ENCODE measurements at regions of chr17 and their contacts with region 1.

Region 1: GRCh38 chr17:1716076-1716995 is 6.2 kb upstream of the TLCD2 start:
- DNase-seq: peak; percentile 100
- ATAC-seq: peak; percentile 86
- H3K4me3 Mint-ChIP-seq: peak overlapping the region; percentile 95
- H3K27ac Mint-ChIP-seq: peak overlapping the region; percentile 95
- H3K4me1 Mint-ChIP-seq: peaks cover 37% of the 10 kb centered on the region
- H3K27me3 Mint-ChIP-seq: peaks cover 6% of the 10 kb centered on the region

Region 2: DNA sequence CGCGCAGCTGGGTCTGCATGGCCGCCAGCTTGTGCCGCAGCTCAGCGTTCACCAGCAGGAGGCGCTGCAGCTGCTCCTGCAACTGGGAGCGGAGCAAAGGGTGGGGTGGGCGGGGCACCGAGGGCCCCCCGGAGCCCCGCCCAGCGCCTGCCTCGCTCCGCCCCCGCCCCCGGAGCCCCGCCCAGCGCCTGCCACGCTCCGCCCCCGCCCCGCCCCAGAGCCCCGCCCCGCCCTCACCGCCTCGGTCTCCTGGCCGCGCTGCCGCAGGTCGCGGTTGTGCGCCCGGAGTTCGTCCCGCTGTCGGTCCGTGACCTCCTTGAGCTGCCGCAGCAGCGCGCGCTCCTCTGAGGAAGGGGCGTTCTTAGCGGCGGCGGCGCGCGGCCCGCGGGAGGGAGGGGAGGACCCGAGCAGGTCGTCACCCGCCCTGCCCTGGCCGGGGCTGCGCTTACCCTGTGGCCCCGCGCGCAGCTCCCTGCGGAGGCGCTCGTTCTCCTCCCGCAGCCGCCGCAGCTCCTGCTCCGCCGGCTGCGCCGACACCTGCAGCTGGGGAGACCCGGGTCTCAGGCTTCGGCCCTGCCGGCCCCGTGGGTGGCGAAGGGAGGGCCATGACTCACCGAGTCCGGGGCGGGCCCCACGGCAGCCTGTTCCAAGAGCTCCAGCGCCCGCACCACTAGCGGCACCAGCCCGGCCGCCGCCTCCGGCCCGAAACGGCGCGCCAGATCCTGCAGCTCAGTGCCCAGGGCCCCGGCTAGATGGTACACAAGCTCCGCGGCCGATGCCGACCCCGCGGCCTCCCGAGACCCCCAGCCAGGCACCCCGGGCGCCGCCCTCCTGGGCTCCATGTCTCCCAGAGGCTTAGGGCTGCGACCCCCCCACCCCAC is 67.1 kb before region 1 on chr17:
- CTCF ChIA-PET with region 1: interaction called, 18 read pairs
- POLR2A ChIA-PET with region 1: no interaction called
- DNase-seq: peak; percentile 95
- ATAC-seq: peak; percentile 80
- H3K4me3 Mint-ChIP-seq: peak overlapping the region; percentile 66
- H3K27ac Mint-ChIP-seq: peak overlapping the region; percentile 63
- H3K4me1 Mint-ChIP-seq: peaks cover 43% of the 10 kb centered on the region
- H3K27me3 Mint-ChIP-seq: no peaks in the 10 kb centered on the region

Region 3: DNA sequence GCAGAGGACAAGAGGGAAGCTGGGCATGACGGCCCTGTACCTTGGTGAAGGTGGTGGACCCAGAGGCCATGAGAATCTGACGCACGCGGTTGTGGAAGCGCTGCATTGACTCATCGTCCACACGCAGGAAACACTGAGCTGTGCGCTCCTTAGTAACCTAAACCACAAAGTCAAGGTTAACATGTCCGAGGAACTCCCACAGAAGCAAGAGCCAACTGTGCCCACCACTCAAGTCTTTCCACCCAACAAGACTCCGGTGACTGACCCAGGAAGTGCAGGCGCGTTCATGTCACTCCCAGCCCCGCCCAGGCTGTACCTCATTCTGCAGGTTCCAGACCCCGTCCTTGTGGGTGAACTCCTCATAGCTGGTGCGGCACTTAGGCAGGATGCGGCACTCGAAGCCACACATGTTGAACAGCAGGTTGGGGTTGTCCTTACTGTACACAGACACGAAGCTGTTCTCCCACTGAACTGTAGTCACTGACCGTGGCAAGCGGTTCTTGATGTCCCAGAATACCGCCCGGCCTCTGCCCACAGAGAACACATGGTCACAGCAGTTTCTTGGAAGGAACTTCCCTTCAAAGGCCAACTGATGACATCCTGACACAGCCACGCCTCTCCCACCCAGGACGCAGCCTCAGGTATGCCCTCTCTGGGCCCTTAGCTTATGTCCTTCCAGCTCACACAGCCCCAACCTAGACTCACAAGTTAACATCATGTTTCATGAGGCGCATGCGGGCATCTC is 43.1 kb before region 1 on chr17:
- CTCF ChIA-PET with region 1: interaction called, 13 read pairs
- POLR2A ChIA-PET with region 1: no interaction called
- DNase-seq: no peak
- ATAC-seq: peak; percentile 31
- H3K4me3 Mint-ChIP-seq: no peak overlapping the region
- H3K27ac Mint-ChIP-seq: no peak overlapping the region
- H3K4me1 Mint-ChIP-seq: peaks cover 3% of the 10 kb centered on the region
- H3K27me3 Mint-ChIP-seq: no peaks in the 10 kb centered on the region

Region 4: DNA sequence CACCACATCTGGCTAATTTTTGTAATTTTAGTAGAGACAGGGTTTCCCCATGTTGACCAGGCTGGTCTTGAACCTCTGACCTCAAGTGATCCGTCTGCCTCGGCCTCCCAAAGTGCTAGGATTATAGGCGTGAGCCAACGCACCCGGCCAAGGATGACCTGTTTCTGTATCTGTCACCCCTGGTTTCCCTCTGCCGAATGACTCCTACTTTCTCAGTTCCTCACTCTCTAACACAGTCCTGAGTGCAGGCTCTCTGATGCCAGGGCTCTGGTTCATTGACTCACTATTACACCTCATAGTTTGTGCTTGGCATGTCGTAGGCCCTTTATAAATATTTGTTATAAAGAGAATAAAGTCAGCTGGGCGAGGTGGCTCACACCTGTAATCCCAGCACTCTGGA is 21.0 kb before region 1 on chr17:
- CTCF ChIA-PET with region 1: no interaction called
- POLR2A ChIA-PET with region 1: no interaction called
- DNase-seq: no peak
- ATAC-seq: no peak
- H3K4me3 Mint-ChIP-seq: no peak overlapping the region
- H3K27ac Mint-ChIP-seq: no peak overlapping the region
- H3K4me1 Mint-ChIP-seq: no peaks in the 10 kb centered on the region
- H3K27me3 Mint-ChIP-seq: peaks cover 3% of the 10 kb centered on the region

Region 5: DNA sequence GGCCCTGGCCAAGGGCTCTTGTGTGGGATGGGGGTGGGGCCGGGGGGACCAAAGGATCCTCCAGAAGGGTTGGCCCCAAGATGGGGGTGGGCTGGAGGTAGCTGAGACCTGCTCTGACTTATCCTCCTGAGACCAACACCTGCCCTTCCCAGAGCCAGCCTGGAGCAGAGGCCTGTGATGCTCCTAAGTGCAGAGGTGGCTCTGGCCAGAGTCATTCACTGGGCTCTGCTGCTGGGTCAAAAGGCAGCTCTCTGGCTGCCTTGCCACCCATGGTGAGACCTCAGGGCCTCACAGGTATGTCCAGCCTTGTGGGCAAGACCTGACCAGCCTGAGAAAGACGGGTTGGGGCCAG is 26.7 kb after region 1 on chr17:
- CTCF ChIA-PET with region 1: no interaction called
- POLR2A ChIA-PET with region 1: no interaction called
- DNase-seq: no peak
- ATAC-seq: no peak
- H3K4me3 Mint-ChIP-seq: no peak overlapping the region
- H3K27ac Mint-ChIP-seq: no peak overlapping the region
- H3K4me1 Mint-ChIP-seq: no peaks in the 10 kb centered on the region
- H3K27me3 Mint-ChIP-seq: no peaks in the 10 kb centered on the region

Region 6: GRCh38 chr17:1783834-1784611 is 67.7 kb after region 1 on chr17:
- CTCF ChIA-PET with region 1: interaction called, 35 read pairs
- POLR2A ChIA-PET with region 1: interaction called, 3 read pairs
- DNase-seq: no peak
- ATAC-seq: no peak
- H3K4me3 Mint-ChIP-seq: no peak overlapping the region
- H3K27ac Mint-ChIP-seq: peak overlapping the region; percentile 33
- H3K4me1 Mint-ChIP-seq: peaks cover 12% of the 10 kb centered on the region
- H3K27me3 Mint-ChIP-seq: no peaks in the 10 kb centered on the region

Region 7: DNA sequence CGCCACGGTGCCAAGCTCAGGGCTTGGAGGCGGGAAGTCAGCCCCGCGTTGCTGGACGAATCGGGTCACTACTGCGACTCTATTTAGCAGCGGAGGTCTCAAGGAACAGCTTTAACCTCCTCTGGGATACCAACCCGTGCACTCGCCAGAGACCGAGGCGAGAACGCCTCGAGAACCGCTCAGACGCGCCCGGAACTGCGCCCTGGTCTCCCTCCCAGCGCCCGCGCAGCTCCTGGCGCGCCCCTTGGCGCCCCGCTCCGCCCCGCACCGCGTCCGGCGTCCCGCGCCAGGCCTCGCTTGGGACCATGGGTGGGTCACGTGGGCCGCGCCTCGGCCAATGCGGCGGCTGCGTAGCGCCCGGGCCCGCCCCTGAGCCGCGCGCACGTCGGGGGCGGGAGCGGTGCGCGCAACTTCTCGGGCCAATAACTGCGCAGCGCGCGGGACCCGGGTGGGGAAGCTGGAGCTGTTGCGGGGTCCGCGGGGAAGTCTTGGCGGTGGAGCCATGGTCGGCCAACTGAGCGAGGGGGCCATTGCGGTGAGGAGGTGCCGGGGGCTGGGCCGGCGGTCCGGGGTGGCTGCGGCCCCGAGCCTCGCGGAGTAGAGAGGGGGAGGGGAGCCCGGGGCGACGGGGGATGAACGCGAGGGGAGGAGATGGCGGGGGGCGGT is 113.4 kb after region 1 on chr17 and contains the starts of genes RPA1 and SMYD4:
- CTCF ChIA-PET with region 1: interaction called, 17 read pairs
- POLR2A ChIA-PET with region 1: interaction called, 16 read pairs
- DNase-seq: peak; percentile 92
- ATAC-seq: peak; percentile 99
- H3K4me3 Mint-ChIP-seq: peak within 1 kb of the TSS; percentile 91
- H3K27ac Mint-ChIP-seq: peak within 1 kb of the TSS; percentile 91
- H3K4me1 Mint-ChIP-seq: peaks cover 71% of the 10 kb centered on the region
- H3K27me3 Mint-ChIP-seq: no peaks in the 10 kb centered on the region
- total RNA-seq, gene RPA1: 314 to 325 TPM
- total RNA-seq, gene SMYD4: 40.3 to 41.7 TPM

Region 8: GRCh38 chr17:1865252-1866037 is 149.1 kb after region 1 on chr17:
- CTCF ChIA-PET with region 1: interaction called, 44 read pairs
- POLR2A ChIA-PET with region 1: interaction called, 9 read pairs
- DNase-seq: peak; percentile 70
- ATAC-seq: peak; percentile 59
- H3K4me3 Mint-ChIP-seq: no peak overlapping the region
- H3K27ac Mint-ChIP-seq: no peak overlapping the region
- H3K4me1 Mint-ChIP-seq: peaks cover 20% of the 10 kb centered on the region
- H3K27me3 Mint-ChIP-seq: no peaks in the 10 kb centered on the region

Measured in activated CD8-positive, alpha-beta T cell treated with anti-CD3 and anti-CD28 coated beads, Interleukin-2, amount 10 ng/mL, durations not matched to agents 7 days and 5 days (primary cell).